ENCODE measurements at regions of chr5 and their contacts with region 1.

Region 1: DNA sequence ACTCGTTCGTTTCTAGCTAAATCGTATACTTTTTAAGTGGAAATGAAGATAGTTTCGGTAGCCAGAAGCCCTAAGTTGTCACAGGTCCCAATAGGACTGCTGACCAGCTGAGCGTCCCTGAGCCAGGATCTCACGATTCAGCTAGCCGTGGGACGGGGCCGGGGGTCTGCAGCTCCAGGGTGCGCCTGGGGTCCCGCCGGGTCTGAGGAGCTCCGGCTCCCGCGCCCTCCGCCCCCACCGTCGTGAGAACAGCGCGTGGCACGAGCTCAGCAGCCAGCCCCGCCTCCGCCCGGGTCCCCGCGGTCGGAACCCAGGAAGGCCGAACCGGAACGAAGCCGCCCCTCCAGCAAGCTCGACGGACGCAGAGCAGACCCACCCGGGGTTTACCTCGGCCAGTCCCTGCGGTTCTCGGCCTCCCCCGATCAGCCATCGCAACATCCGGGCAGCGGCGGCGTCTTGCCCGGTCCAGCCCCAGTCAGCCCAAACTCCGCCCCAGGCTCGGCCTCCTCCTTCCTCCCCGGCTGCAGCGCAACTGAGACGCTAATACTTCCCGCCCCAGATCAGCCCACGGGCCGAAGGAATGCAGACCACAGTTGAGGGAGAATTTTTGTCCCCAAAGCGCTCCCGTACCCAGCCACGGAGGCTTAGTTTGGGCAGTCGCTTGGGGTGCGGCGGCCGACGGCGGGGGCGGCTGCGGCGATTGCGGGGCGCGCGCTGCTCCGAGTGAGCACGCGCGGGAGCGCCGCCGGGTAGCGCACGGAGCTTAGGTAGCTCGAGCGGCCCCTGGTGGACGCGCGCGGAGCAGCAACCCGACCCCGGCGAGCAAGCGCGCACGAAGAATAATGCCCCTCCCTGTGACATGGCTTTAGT is at the start of gene WDR41:
- DNase-seq: peak; percentile 92 to 96
- ATAC-seq: peak; percentile 94 to 96 (median 96)
- H3K4me3 ChIP-seq: peak within 1 kb of the TSS; percentile 87
- H3K27ac ChIP-seq: peak within 1 kb of the TSS; percentile 91
- H3K4me1 ChIP-seq: no peaks in the 10 kb centered on the region
- H3K27me3 ChIP-seq: no peaks in the 10 kb centered on the region
- CTCF ChIP-seq: peak; percentile 97
- total RNA-seq, gene WDR41: 26.6 to 32.2 (median 29.0) TPM

Region 2: DNA sequence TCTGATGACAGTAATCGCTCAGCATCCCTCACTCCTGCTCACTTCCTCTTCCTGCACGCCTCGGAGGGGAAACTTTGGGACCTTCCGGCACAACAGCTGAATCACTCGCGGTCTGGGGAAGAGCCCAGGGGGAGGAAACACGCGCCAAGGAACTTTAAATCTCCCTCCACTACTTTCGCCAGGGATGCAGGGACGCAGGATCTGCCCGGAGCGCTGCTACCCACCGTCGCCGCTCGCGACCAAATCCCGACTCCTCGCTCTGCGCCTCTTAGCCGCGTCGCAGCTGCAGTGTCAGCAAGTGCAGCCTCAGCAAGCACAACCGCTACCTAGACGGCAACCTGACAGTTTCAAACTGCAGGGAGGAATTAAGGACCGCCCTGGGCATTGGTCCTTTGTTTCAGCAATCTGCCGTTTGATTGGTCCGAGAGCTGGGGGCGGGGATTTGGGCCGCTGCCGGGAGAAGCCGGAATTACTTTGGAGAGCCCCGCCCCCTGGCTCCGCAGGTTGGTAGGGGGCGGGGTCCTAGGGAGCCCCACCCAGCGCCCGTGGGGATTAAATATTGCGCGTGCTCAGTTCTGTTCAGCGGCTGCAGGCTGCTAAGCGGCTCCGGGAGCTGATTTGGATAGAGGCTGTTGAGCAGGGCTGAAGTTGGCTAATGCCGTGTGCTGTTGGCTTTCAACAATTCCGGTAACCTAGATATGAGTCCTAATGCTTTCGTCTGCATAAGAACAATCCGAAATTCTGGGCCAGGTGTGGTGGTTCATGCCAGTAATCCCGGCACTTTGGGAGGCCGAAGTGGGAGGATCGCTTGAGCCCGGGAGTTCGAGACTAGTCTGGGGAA is 1774.7 kb before region 1 on chr5 and contains the start of gene POC5:
- intact Hi-C with region 1: loop called in 1 of 2 experiments (anchors 5 kb)
- DNase-seq: peak; percentile 96 to 98
- ATAC-seq: peak; percentile 98 to 99 (median 98)
- H3K4me3 ChIP-seq: peak within 1 kb of the TSS; percentile 78
- H3K27ac ChIP-seq: peak within 1 kb of the TSS; percentile 88
- H3K4me1 ChIP-seq: no peaks in the 10 kb centered on the region
- H3K27me3 ChIP-seq: no peaks in the 10 kb centered on the region
- CTCF ChIP-seq: no peak
- total RNA-seq, gene POC5: 3.3 to 4.5 (median 3.5) TPM

Region 3: GRCh38 chr5:77076961-77077823 is 414.8 kb before region 1 on chr5:
- intact Hi-C with region 1: loop called in 1 of 2 experiments (anchors 5 kb)
- DNase-seq: peak; percentile 78 to 83
- ATAC-seq: peak; percentile 78 to 93 (median 90)
- H3K4me3 ChIP-seq: peak overlapping the region; percentile 63
- H3K27ac ChIP-seq: peak overlapping the region; percentile 42
- H3K4me1 ChIP-seq: no peaks in the 10 kb centered on the region
- H3K27me3 ChIP-seq: no peaks in the 10 kb centered on the region
- CTCF ChIP-seq: peak; percentile 73

Region 4: GRCh38 chr5:77143998-77144836 is 347.8 kb before region 1 on chr5:
- intact Hi-C with region 1: loop called (anchors 1 to 10 kb)
- DNase-seq: peak; percentile 53 to 80
- ATAC-seq: peak; percentile 72 to 94 (median 86)
- H3K4me3 ChIP-seq: no peak overlapping the region
- H3K27ac ChIP-seq: no peak overlapping the region
- H3K4me1 ChIP-seq: no peaks in the 10 kb centered on the region
- H3K27me3 ChIP-seq: no peaks in the 10 kb centered on the region
- CTCF ChIP-seq: peak; percentile 88

Measured in psoas muscle (tissue), 8 donors.